ENCODE measurements at regions of chr16 and their contacts with region 1.

Region 1: GRCh38 chr16:20849587-20850390 is 43.5 kb downstream of the REXO5 start:
- DNase-seq: no peak
- H3K4me3 ChIP-seq: no peak overlapping the region
- H3K27ac ChIP-seq: peak overlapping the region in 3 of 4 donors; percentile 83 to 87 (median 84)
- H3K4me1 ChIP-seq: peaks cover 15 to 50% (median 25%) of the 10 kb centered on the region in 3 donors
- H3K27me3 ChIP-seq: no peaks in the 10 kb centered on the region
- CTCF ChIP-seq: peak; percentile 87 to 99 (median 96)
- POLR2A ChIP-seq: no peak

Region 2: GRCh38 chr16:20883558-20884556 is 34.1 kb after region 1 on chr16:
- intact Hi-C with region 1: no loop called
- DNase-seq: no peak
- H3K4me3 ChIP-seq: no peak overlapping the region
- H3K27ac ChIP-seq: peak overlapping the region in 3 of 4 donors; percentile 41 to 51 (median 48)
- H3K4me1 ChIP-seq: peaks cover 7 to 73% (median 30%) of the 10 kb centered on the region in 3 donors
- H3K27me3 ChIP-seq: no peaks in the 10 kb centered on the region
- CTCF ChIP-seq: no peak
- POLR2A ChIP-seq: no peak

Region 3: GRCh38 chr16:20910781-20911321 is 61.1 kb after region 1 on chr16:
- intact Hi-C with region 1: loop called (anchors 10 kb)
- DNase-seq: no peak
- H3K4me3 ChIP-seq: no peak overlapping the region
- H3K27ac ChIP-seq: peak overlapping the region; percentile 71 to 88 (median 80)
- H3K4me1 ChIP-seq: peaks cover 3 to 63% (median 27%) of the 10 kb centered on the region in 3 donors
- H3K27me3 ChIP-seq: no peaks in the 10 kb centered on the region
- CTCF ChIP-seq: no peak
- POLR2A ChIP-seq: no peak

Region 4: GRCh38 chr16:21083729-21084268 is 234.0 kb after region 1 on chr16:
- intact Hi-C with region 1: loop called (anchors 5 kb)
- DNase-seq: no peak
- H3K4me3 ChIP-seq: no peak overlapping the region
- H3K27ac ChIP-seq: no peak overlapping the region
- H3K4me1 ChIP-seq: peaks cover 0 to 2% (median 0%) of the 10 kb centered on the region in 3 donors
- H3K27me3 ChIP-seq: no peaks in the 10 kb centered on the region
- CTCF ChIP-seq: peak; percentile 52 to 78 (median 64)
- POLR2A ChIP-seq: no peak

Measured in esophagus squamous epithelium (tissue), 5 donors.